GM23248 (cell line): ENCODE measurements at regions of chr12 and their contacts with region 1.

Region 1: GRCh38 chr12:88153959-88154358 is 11.9 kb downstream of the TMTC3 start:
- DNase-seq: peak; percentile 76
- H3K4me3 ChIP-seq: no peak overlapping the region
- H3K27ac ChIP-seq: no peak overlapping the region
- H3K4me1 ChIP-seq: peaks cover 23% of the 10 kb centered on the region
- H3K27me3 ChIP-seq: no peaks in the 10 kb centered on the region

Region 2: DNA sequence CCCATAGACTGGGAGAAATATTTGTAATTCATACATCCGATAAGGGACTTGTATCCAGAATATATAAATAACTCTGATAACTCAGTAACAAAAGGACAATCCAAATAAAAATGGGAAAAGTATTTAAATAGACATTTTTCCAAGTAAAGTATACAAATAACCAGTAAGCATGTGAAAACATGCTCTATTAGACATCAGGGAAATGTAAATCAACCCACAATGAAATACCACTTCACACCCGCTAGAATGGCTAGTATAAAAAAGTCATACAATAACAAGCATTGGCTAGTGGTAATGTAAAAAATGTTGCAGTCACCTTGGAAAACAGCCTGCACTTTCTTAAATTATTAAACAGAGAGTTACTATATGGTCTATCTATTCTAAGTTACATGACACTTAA is 775.4 kb before region 1 on chr12:
- in situ Hi-C with region 1: no loop called
- DNase-seq: no peak
- H3K4me3 ChIP-seq: no peak overlapping the region
- H3K27ac ChIP-seq: no peak overlapping the region
- H3K4me1 ChIP-seq: no peaks in the 10 kb centered on the region
- H3K27me3 ChIP-seq: no peaks in the 10 kb centered on the region

Region 3: DNA sequence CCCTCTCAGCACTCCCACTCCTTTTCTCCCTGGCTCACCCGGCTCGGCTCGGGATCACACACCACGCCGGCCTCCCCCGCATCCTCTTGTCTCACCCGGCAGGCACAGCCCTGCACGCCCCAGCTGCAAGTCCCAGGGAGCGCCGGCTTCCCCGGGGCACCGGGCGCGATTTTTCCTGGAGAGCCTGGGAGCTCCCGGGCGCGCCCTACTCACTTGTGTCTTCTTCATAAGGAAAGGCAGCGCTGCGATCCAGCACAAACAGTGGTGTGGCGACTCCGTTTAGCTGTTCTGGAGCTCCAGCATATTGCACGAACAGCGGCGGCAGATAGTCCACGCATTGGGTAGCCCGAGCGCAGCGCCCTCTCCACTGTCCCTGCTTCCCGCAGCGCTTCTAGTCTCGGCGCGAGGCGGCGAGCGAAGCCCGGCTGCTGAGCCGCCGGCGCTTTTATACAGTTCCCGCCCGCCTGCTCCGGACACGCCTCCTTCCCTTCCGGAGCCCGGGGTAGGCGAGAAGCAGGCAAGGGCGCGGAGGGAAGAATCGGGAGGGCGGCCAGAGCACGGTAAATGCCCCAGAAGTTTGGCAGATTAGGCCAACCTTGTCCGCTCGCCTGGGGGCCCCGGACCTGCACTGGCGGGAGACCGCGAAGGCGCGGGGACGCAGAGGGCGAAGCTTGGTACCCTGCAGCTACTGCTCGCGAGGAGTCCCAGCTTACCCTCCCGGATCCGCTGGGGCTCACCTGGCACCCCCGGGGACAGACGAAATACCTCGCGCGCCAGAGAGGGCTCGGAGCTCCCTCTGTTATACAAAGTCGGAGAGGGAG is 426.3 kb after region 1 on chr12 and contains the start of gene KITLG:
- in situ Hi-C with region 1: loop called (anchors 10 kb)
- DNase-seq: peak; percentile 95
- H3K4me3 ChIP-seq: peak within 1 kb of the TSS; percentile 95
- H3K27ac ChIP-seq: peak within 1 kb of the TSS; percentile 60
- H3K4me1 ChIP-seq: peaks cover 22% of the 10 kb centered on the region
- H3K27me3 ChIP-seq: no peaks in the 10 kb centered on the region
- total RNA-seq, gene KITLG: 98.4 and 146 TPM in 2 replicates

Region 4: GRCh38 chr12:88993651-88994050 is 839.7 kb after region 1 on chr12:
- in situ Hi-C with region 1: loop called (anchors 10 kb)
- DNase-seq: peak; percentile 77
- H3K4me3 ChIP-seq: no peak overlapping the region
- H3K27ac ChIP-seq: no peak overlapping the region
- H3K4me1 ChIP-seq: peaks cover 26% of the 10 kb centered on the region
- H3K27me3 ChIP-seq: no peaks in the 10 kb centered on the region